ENCODE measurements at regions of chr10 and their contacts with region 1.

Region 1: DNA sequence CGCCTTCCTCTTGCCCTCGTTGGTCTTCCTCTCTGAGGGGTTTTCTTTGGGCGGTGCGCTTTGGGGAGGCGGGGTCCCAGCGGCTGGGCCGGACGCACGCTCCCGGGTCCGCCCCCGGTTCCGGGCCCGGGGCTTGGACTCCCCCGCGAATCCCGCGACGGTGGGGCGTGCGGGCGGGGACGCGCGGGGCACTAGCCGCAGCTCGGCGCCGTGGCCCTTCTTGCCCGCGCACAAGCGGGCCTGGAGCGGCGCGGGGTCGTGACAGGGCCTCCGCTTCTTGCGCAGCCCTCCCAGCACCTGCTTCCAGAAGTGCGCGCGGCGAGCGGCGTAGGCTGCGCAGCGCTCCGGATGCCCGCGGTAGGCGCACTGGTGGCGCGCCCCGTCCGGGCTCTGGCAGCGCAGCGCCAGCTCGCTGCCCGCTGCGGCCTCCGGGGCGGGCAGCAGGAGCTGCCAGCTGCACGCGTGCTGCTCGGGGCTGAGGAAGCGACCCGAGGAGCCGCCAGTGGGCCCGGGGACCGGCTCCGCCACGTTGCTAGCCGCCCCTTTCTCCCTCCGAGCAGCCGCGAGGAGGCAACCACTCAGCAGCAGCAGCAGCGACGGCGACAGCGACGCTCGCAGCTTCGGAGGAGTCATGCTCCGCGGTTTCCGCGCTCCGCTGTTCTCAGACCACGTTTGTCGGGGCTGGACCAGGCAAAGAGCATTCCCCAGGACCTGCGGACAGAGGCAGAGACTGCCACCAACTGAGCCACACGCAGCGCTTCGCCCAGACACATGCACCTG is 759 bp downstream of the FGFBP3 start:
- H3K4me3 ChIP-seq: peak overlapping the region; percentile 56
- H3K27ac ChIP-seq: peak overlapping the region; percentile 79; the same call in 1 of the 2 replicates
- H3K4me1 ChIP-seq: peaks cover 2% of the 10 kb centered on the region; the same call in 1 of the 2 replicates
- CTCF ChIP-seq: peak; percentile 99

Region 2: GRCh38 chr10:91758303-91759146 is 150.0 kb before region 1 on chr10:
- CTCF ChIA-PET with region 1: interaction called, 56 read pairs
- POLR2A ChIA-PET with region 1: no interaction called
- H3K4me3 ChIP-seq: no peak overlapping the region
- H3K27ac ChIP-seq: no peak overlapping the region
- H3K4me1 ChIP-seq: no peaks in the 10 kb centered on the region
- CTCF ChIP-seq: no peak

Region 3: DNA sequence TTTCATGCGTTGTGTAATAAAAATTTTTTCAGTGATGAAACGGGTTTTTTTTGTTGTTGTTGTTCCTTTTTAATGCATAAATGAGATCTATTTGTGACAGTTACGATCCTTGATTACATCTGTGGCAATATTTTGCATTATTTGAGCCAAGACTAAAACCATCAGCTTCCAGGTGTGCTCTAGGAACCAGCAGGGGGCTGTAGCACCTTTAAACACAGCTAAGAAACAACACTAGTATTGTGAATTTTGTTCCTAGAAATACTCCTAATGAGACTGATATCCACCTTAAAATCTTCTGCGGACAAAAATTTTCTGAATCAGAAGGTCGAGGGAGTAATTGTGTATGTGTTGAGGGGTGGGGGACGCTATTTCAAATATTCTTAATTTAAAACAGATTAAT is 51.9 kb before region 1 on chr10:
- CTCF ChIA-PET with region 1: interaction called, 20 read pairs
- POLR2A ChIA-PET with region 1: no interaction called
- H3K4me3 ChIP-seq: no peak overlapping the region
- H3K27ac ChIP-seq: no peak overlapping the region
- H3K4me1 ChIP-seq: no peaks in the 10 kb centered on the region
- CTCF ChIP-seq: peak; percentile 38; the same call in 1 of the 2 replicates

Region 4: GRCh38 chr10:91887272-91888076 is 21.1 kb before region 1 on chr10:
- CTCF ChIA-PET with region 1: interaction called, 7 read pairs
- POLR2A ChIA-PET with region 1: interaction called, 18 read pairs
- H3K4me3 ChIP-seq: peak overlapping the region; percentile 35
- H3K27ac ChIP-seq: peak overlapping the region; percentile 75
- H3K4me1 ChIP-seq: peaks cover 30% of the 10 kb centered on the region
- CTCF ChIP-seq: no peak

Region 5: DNA sequence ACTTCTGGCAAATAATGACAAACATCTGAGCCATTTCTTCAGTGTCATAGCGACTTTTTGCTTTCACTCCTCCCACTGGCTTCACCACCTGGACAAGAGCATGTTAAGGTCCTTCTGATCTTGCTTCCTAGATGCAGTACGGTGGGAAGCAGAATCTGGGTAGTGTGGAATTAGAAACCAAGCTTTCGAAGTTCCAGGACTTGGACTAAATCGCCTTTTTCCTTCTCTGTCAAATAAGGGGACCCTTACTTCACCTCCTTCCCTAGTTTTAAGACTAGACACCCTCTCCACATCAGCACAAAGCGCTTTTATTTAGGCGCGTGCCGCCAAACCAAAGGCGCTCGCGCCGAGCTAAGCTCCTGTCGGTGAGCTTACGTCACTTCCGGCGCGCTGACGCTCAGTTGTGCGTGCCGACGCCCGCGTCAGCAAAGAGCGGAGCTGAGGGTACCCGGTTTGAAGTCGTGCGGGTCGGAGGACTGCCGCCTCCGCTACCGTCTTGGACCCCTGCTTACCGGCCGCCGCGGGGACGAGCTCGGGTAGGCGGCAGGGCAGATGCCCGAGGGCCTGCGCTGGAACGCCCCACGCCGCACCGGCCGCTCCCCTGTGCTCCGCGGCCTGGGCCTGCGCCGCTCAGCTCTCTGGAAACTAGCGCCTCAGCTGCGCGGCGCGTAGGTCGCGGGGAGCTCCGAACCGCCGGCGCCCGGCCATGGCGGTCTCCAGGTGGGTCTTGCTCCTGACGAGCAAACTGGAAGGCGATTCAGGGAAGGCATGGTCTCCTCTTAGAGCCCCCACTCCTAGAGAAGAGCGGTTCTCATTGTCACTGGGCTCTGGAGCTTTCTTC is 15.1 kb after region 1 on chr10 and contains the start of gene BTAF1:
- CTCF ChIA-PET with region 1: interaction called, 13 read pairs
- POLR2A ChIA-PET with region 1: interaction called, 16 read pairs
- H3K4me3 ChIP-seq: peak within 1 kb of the TSS; percentile 85
- H3K27ac ChIP-seq: peak within 1 kb of the TSS; percentile 88
- H3K4me1 ChIP-seq: peaks cover 3% of the 10 kb centered on the region
- CTCF ChIP-seq: no peak